ENCODE measurements at regions of chr17 and their contacts with region 1.

Region 1: DNA sequence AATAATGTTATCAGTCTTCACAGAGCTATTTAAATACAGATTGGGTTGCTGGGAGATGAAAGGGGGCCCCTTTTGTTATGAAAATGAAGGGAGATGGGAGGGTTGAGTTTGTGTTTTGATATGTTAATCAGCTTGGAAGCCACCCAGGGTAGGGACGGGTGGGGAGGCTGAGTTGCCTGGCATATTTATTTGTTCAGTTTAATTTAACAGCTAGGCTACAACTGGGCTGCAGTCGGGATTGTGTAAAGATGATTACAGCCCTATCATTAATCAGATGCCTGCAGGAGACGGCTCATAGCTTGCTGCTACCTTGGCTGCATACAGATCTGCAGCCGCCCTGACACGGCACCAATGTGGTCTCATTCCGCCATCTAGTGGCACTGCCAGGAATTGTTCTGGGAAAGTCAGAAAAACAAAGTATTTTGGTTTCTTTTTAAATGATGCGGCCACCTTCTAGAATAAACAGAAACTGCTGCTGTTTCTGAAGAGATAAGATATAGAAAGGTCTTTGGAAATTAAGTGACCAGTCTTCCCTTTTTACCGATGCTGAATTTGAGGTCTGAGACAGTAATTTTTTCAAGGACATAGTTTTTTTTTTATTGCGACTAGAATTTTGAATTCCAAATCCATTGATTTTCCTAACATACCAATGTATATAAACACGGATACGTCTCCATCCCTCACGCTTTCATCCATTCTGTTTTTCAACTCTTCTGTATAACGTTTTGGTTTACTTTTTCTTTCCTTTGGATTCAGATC is 458.0 kb upstream of the ASIC2 start:
- DNase-seq: peak; percentile 32 to 73 (median 57)
- ATAC-seq: peak; percentile 55
- H3K4me3 ChIP-seq: no peak overlapping the region
- H3K4me3 Mint-ChIP-seq: peak overlapping the region; percentile 35
- H3K27ac ChIP-seq: no peak overlapping the region
- H3K27ac Mint-ChIP-seq: no peak overlapping the region
- H3K4me1 ChIP-seq: no peaks in the 10 kb centered on the region
- H3K4me1 Mint-ChIP-seq: peaks cover 6% of the 10 kb centered on the region
- H3K27me3 ChIP-seq: peaks cover 0 to 2% of the 10 kb centered on the region in 2 experiments
- H3K27me3 Mint-ChIP-seq: peaks cover 35% of the 10 kb centered on the region
- CTCF ChIP-seq: peak; percentile 98

Region 2: GRCh38 chr17:32997753-32998632 is 753.1 kb before region 1 on chr17:
- CTCF ChIA-PET with region 1: no interaction called
- POLR2A ChIA-PET with region 1: no interaction called
- intact Hi-C with region 1: loop called in 1 of 2 experiments (anchors 1 kb)
- DNase-seq: peak; percentile 56 to 81 (median 69)
- ATAC-seq: peak; percentile 59
- H3K4me3 ChIP-seq: no peak overlapping the region
- H3K4me3 Mint-ChIP-seq: no peak overlapping the region
- H3K27ac ChIP-seq: no peak overlapping the region
- H3K27ac Mint-ChIP-seq: no peak overlapping the region
- H3K4me1 ChIP-seq: peaks cover 8% of the 10 kb centered on the region
- H3K4me1 Mint-ChIP-seq: peaks cover 4% of the 10 kb centered on the region
- H3K27me3 ChIP-seq: peaks cover 0 to 2% of the 10 kb centered on the region in 2 experiments
- H3K27me3 Mint-ChIP-seq: peaks cover 24% of the 10 kb centered on the region
- CTCF ChIP-seq: peak; percentile 83

Region 3: GRCh38 chr17:33520426-33521330 is 230.4 kb before region 1 on chr17:
- CTCF ChIA-PET with region 1: interaction called, 3 read pairs
- POLR2A ChIA-PET with region 1: no interaction called
- intact Hi-C with region 1: loop called in 1 of 2 experiments (anchors 1 kb)
- DNase-seq: peak in 6 of 9 experiments; percentile 10 to 38 (median 26)
- ATAC-seq: no peak
- H3K4me3 ChIP-seq: no peak overlapping the region
- H3K4me3 Mint-ChIP-seq: no peak overlapping the region
- H3K27ac ChIP-seq: no peak overlapping the region
- H3K27ac Mint-ChIP-seq: no peak overlapping the region
- H3K4me1 ChIP-seq: no peaks in the 10 kb centered on the region
- H3K4me1 Mint-ChIP-seq: no peaks in the 10 kb centered on the region
- H3K27me3 ChIP-seq: no peaks in the 10 kb centered on the region
- H3K27me3 Mint-ChIP-seq: peaks cover 2% of the 10 kb centered on the region
- CTCF ChIP-seq: peak; percentile 44

Region 4: DNA sequence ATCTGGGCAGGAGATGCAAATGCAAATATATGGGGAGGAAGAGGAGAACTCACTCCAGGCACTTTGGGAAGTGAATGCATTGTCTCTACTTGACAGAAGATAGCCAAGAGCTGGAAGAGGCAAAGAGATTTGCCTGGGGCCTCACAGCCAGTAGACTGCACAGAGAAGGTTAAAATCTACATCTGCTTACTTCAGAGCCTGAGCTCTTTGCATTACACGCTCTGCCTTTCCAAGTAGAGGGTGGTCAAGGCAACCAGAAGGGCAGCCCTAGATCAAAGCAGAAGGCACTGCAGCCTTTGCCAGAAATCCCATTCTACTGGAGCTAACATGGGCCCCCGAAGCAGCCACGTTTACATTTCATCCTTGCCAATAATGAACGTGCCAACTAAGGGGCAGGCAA is 96.8 kb after region 1 on chr17:
- CTCF ChIA-PET with region 1: no interaction called
- POLR2A ChIA-PET with region 1: no interaction called
- intact Hi-C with region 1: no loop called
- DNase-seq: no peak
- ATAC-seq: no peak
- H3K4me3 ChIP-seq: no peak overlapping the region
- H3K4me3 Mint-ChIP-seq: no peak overlapping the region
- H3K27ac ChIP-seq: no peak overlapping the region
- H3K27ac Mint-ChIP-seq: no peak overlapping the region
- H3K4me1 ChIP-seq: no peaks in the 10 kb centered on the region
- H3K4me1 Mint-ChIP-seq: no peaks in the 10 kb centered on the region
- H3K27me3 ChIP-seq: no peaks in the 10 kb centered on the region
- H3K27me3 Mint-ChIP-seq: no peaks in the 10 kb centered on the region
- CTCF ChIP-seq: no peak